ENCODE measurements at regions of chr14 and their contacts with region 1.

Region 1: GRCh38 chr14:102437997-102438915 is 71.3 kb downstream of the ANKRD9 start:
- DNase-seq: peak; percentile 87 to 92 (median 91)
- ATAC-seq: peak; percentile 80
- H3K4me3 ChIP-seq: no peak overlapping the region
- H3K4me1 ChIP-seq: peaks cover 16% of the 10 kb centered on the region
- CTCF ChIP-seq: peak; percentile 65

Region 2: DNA sequence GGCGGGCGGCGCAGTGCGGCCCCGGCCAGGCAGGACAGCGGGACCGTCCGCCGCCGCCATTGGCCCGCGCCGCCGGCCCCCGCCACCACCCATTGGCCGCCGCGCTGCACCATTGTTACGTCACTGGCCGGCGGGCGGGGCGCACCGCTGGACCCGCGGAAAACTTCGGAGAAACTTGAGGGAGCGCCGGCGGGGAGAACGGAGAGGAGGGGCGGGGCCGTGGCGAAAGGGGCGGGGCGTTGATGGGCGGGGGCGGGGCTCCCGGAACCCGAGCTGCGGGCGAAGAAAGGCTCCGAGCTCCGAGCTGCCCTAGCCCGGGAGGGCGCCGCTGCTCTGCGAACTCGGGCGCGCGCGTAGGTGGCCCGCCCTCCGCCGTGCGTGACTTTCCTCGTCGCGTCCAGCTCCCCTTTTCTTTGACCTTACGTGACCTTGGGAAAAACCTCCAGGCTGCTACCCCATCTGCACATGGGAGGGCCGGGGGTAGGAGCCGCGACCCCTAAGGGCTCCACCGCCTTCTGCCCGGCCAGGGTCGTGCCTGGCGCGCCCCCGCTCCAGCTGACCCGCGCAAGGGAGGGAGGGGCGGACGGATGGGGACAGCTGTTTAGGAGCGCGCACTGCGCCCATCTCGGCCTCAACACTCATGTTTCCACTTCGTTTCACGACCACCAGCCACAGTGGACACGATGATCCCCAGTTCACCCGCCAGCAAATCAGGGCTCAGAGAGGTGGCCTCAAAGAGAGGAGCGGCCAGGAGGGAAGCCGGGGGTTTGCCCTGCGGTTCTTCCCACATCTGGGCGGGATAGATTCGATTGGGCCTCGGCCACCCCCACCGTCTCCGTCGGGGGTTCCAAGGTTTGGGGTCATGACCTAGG is 71.7 kb after region 1 on chr14 and contains the start of gene ANKRD9:
- intact Hi-C with region 1: loop called (anchors 5 to 10 kb)
- DNase-seq: peak; percentile 95 to 97 (median 97)
- ATAC-seq: peak; percentile 77
- H3K4me3 ChIP-seq: peak within 1 kb of the TSS; percentile 33
- H3K4me1 ChIP-seq: peaks cover 26% of the 10 kb centered on the region
- CTCF ChIP-seq: no peak
- total RNA-seq, gene ANKRD9: 75.6 to 100 (median 84.7) TPM

Region 3: DNA sequence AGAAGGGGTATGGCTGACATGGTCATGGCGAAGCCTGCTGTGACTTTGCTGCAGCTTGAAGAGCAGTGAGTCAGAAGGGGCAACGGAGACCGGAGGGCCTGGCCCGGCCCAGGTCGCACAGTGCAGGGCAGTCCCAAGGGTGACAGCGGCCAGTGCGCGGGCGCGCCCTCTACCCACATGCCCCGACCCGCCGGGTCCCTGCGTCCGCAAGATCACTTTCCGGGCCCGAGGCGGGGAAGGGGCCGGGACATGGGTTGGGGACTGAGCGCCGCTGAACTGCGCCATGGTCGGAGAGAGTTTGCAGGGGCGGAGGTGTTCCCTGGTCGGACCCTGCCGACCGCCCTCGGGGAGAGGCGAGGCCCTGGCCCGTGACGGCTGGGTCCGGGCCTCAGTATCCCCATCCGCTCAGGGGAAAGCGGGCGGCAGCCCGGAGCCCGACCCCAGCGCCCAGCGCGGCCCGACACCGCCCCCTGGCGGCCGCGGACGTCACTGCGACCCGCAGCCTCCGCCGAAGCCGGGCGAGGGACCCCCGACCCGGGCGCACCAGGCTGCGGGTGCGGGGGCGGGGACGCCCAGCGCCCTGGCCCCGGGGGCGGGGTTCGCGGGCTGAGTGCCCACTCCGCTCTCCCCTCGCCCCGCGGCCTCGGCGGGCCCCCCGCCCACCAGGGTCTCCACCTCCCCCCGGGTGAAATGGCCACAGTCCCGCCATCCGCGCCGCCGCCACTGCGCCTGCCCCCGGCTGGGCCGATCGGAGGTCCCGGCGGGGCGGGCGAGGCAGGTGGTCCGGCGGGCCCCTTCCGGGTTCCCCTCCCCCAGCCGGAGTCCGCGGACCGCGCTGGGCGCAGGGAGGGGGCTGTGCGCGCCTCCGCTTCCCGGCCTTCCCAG is 78.5 kb after region 1 on chr14:
- intact Hi-C with region 1: loop called (anchors 5 to 10 kb)
- DNase-seq: peak; percentile 69 to 85 (median 70)
- ATAC-seq: peak; percentile 93
- H3K4me3 ChIP-seq: peak overlapping the region; percentile 56
- H3K4me1 ChIP-seq: peaks cover 11% of the 10 kb centered on the region
- CTCF ChIP-seq: peak; percentile 97

Measured in mucosa of descending colon (tissue), 3 donors.